Prostate gland (tissue), 2 donors: ENCODE measurements at regions of chr7 and their contacts with region 1.

Region 1: DNA sequence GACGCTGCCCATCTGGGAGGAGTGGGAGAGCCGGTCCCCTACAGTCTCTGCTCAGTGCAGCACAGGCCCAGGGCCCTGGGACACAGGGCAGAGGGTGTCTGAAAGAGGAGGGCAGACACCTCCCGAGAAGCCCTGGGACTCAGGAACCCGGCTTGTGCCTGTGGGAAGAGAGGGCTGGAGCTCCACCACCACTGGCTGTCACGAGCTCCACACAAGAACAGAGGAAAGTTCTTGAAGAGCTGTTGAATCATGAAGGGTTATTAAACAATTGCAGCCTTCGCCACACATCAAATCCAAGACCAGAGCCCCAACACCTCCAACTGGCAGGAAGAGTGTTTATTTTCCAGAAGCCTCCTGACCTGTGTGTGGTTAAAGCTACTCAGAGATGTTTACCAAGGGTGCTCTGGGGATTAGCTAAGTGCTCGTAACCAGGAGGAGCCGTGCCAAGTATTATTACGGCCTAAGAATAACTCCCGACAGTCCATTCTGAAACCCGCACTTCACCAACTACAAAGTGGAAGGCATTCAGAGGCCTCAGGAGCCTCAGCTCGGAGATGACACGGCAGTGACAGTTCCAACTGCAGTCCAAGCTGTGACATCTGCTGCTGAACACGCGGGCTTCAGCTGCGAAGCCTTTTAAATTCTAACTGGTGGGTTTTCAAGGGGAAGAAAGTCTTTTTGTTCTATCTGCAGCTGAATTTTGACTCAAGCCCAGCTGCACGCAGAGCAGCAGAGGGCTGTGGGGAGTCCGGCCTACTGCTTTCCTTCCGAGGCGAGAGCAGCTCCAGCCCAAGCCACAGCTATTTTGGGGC is 75.1 kb downstream of the MAD1L1 start:
- DNase-seq: peak; percentile 74
- H3K4me3 ChIP-seq: no peak overlapping the region
- H3K27ac ChIP-seq: peak overlapping the region; percentile 30 to 60
- H3K4me1 ChIP-seq: peaks cover 6% of the 10 kb centered on the region
- H3K27me3 ChIP-seq: no peaks in the 10 kb centered on the region
- CTCF ChIP-seq: no peak
- POLR2A ChIP-seq: no peak

Region 2: GRCh38 chr7:1323178-1324030 is 834.3 kb before region 1 on chr7:
- intact Hi-C with region 1: no loop called
- DNase-seq: no peak
- H3K4me3 ChIP-seq: no peak overlapping the region
- H3K27ac ChIP-seq: no peak overlapping the region
- H3K4me1 ChIP-seq: no peaks in the 10 kb centered on the region
- H3K27me3 ChIP-seq: peaks cover 23% of the 10 kb centered on the region
- CTCF ChIP-seq: no peak
- POLR2A ChIP-seq: no peak

Region 3: GRCh38 chr7:2109936-2110585 is 47.6 kb before region 1 on chr7:
- intact Hi-C with region 1: loop called (anchors 5 kb)
- DNase-seq: no peak
- H3K4me3 ChIP-seq: no peak overlapping the region
- H3K27ac ChIP-seq: no peak overlapping the region
- H3K4me1 ChIP-seq: no peaks in the 10 kb centered on the region
- H3K27me3 ChIP-seq: no peaks in the 10 kb centered on the region
- CTCF ChIP-seq: no peak
- POLR2A ChIP-seq: no peak